GM12878 (cell line): ENCODE measurements at regions of chr11 and their contacts with region 1.

Region 1: DNA sequence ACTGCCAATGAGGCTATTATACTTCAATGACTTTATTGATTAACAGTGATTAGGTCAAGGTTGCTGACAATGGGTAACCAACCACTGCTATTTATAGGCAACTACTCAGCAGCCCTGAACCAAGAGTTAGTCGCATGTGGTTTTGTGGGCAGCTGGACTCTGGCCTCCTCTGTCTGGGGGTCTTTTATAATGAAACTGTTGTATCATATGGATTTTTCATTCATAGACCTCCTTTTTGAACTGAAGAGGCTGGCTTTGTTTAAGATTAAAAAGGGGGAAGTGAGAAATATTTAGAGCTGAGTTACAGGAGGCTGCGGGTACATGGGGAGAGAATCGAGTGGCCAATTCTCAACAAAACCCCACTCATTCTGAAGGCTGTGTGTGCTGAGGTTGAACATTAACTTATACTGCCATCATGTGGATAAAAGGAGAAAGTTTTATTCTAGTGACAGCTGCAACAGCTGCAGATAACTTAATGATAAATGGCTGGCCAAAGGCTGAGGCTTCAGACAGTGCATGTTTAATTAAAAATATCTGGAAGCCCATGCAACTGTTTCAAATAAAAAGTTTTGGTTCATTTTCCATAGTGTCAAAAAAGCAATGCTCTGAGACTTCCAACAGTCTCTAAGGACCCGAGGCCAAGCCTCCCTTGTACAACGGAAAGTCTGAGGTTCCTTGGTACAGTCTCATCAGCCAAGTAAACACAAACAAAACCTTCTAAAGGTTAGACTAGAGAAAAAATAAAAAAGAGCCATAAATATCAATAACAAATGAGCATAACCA is 682.6 kb downstream of the KCNA4 start:
- DNase-seq: peak; percentile 31
- ATAC-seq: peak; percentile 87
- H3K4me3 ChIP-seq: no peak overlapping the region
- H3K27ac ChIP-seq: no peak overlapping the region
- H3K4me1 ChIP-seq: no peaks in the 10 kb centered on the region
- H3K27me3 ChIP-seq: no peaks in the 10 kb centered on the region; a peak in 1 of 4 replicates
- CTCF ChIP-seq: peak; percentile 37 to 66 (median 46); a peak in 5 of 6 replicates
- EP300 ChIP-seq: peak; percentile 80 to 81; a peak in 2 of 4 replicates
- POLR2A ChIP-seq: no peak
- RAD21 ChIP-seq: peak; percentile 71

Region 2: DNA sequence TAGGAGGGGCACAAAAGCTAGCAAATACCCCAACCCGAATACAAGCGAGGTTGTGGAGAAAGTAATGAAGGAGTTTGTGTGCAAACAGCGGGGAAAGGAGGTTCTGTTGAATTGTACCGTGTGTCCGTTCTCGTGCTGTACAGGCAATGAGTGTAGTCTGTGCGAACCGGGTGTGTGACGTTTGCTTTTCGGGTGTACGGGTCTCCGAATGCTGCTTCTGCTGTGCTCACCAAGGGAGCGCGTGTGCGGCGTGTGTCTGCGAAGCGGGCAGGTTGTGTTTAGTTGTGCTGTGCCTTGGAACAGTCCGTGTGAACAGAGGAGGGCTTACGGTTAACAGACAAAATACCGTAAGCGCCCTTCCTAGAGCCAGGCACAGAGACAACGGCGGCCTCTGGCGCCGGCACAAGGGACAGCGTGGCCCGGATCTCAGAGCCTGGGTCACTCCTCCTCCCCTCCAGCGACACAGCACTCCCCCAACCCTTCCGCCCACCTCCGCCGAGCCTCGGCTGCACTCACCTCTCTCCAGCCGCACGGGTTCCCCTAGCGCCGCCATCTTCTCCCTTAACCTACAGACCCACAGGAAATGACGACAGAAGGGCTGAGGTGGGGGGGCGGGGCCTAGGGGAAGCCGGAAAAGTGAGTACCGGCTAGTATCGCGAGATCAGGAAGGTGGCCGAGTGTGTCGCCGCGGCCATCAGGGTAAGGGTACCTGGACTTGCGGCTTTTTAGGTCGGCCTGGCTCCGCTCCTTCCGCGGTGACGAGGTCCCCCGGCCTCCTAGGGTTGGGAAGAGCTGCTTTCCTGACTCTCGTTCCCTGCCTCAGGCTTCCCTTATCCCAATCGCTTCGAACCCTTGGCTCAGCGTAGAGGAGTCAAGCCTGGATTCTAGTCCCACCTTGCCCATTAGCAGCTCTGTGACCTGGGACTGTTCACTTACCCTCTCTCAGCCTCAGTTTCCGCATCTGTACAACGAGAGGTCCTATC is 1827.7 kb before region 1 on chr11 and contains the start of gene LIN7C:
- CTCF ChIA-PET with region 1: no interaction called
- POLR2A ChIA-PET with region 1: no interaction called
- RAD21 ChIA-PET with region 1: no interaction called
- SMC1A ChIA-PET with region 1: no interaction called
- in situ Hi-C with region 1: no loop called
- intact Hi-C with region 1: loop called (anchors 10 kb)
- DNase-seq: peak; percentile 80
- ATAC-seq: peak; percentile 94
- H3K4me3 ChIP-seq: peak within 1 kb of the TSS; percentile 95
- H3K27ac ChIP-seq: peak within 1 kb of the TSS; percentile 92
- H3K4me1 ChIP-seq: peaks cover 4% of the 10 kb centered on the region; the same call in 1 of the 2 replicates
- H3K27me3 ChIP-seq: no peaks in the 10 kb centered on the region
- CTCF ChIP-seq: peak in 1 of 3 experiments; percentile 20; a peak in 1 of 6 replicates
- EP300 ChIP-seq: no peak
- POLR2A ChIP-seq: peak; percentile 99
- RAD21 ChIP-seq: no peak
- polyA plus RNA-seq, gene LIN7C: 6.0 to 23.7 TPM

Region 3: DNA sequence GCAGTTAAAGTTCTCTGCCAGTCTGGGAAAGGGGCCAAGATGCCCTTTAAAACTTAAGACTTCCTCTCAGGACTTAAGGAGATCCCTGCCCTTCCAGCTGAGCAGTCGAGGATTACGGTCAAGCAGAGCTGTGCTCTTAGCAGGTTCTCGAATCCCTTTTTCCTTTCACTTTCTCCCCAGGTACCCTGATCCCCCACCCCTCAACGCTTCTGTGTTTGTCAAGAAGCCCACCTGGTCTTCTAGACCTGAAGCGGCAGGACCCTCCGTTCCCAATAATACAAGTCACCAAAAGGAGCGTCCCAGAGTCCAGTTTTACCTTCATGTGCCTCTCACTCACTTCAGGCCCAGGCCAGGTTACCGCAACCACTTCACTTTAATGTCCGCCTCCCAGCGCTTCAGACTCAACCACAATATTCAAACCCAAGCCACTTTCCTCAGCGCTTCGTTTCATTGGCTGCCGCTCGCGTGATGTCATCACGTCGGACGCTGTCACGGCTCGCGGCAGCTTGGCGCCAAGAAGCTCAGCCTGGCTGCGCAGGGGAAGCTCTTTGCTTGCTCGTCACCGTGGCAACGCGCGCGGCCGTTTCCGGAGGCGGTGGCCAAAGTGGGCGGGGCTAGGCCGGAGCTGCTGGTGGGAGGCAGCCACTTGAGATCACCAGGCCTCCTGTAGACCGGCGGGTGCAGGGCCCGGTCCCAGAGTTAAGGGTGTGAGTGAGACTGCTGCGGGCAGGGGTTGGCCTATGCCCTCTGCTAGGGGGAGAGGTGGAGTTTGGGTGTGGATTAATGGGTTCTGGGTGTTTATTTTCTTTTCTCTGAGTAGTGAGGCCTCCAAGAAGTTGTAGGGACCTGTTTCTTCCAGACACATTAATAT is 1226.2 kb before region 1 on chr11 and contains the starts of genes KIF18A and METTL15:
- CTCF ChIA-PET with region 1: no interaction called
- POLR2A ChIA-PET with region 1: no interaction called
- RAD21 ChIA-PET with region 1: no interaction called
- SMC1A ChIA-PET with region 1: no interaction called
- in situ Hi-C with region 1: no loop called
- intact Hi-C with region 1: loop called (anchors 10 kb)
- DNase-seq: peak; percentile 96
- ATAC-seq: peak; percentile 91
- H3K4me3 ChIP-seq: peak within 1 kb of the TSS; percentile 86
- H3K27ac ChIP-seq: peak within 1 kb of the TSS; percentile 84
- H3K4me1 ChIP-seq: peaks cover 6% of the 10 kb centered on the region
- H3K27me3 ChIP-seq: no peaks in the 10 kb centered on the region
- CTCF ChIP-seq: no peak
- EP300 ChIP-seq: peak in 1 of 2 experiments; percentile 5; a peak in 1 of 4 replicates
- POLR2A ChIP-seq: peak; percentile 92
- RAD21 ChIP-seq: no peak
- polyA plus RNA-seq, gene KIF18A: 11.5 to 14.9 TPM
- polyA plus RNA-seq, gene METTL15: 10.5 to 15.1 TPM

Region 4: DNA sequence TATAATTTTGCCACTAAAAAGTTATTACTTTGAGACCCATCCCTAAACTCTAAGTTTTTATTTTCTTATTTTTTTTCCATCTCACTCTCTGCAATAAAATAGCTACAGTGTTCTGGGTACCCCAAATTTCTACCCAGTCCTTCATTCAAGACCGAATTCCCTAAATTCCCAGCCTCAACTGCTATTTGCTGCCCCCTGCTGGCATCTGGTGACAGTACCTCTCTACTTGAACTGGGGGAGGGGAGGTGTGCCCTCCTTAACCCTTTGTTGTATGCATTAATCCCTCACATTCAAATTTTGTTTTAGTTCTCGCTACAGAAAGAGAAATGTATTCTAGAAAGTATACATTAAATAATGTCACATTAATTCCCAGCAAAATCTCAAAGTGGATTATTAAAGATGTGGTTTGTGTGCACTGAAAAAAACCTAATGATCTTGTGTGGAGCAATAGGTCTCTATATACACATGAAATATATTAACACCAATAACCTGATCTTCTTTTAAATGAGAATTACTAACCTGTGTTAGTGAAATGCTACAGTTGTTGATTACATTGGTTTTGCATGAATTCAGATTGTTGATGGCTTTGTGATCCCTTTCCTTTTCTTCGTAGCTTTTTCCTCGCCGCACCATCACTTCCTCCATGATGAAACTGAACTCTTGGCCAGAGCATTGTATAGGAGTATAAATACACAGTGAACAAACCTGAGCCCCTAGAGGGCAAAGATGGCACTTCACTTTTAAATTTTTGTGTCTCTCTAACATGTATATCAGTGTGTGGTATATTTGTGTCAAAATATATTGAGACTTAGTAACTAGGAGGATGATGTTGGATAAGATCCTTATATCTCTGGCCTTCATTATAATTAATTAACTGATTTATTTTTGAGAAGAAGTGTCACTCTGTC is 636.0 kb before region 1 on chr11:
- CTCF ChIA-PET with region 1: no interaction called
- POLR2A ChIA-PET with region 1: no interaction called
- RAD21 ChIA-PET with region 1: no interaction called
- SMC1A ChIA-PET with region 1: interaction called, 4 read pairs
- in situ Hi-C with region 1: loop called (anchors 25 kb)
- intact Hi-C with region 1: loop called (anchors 5 kb)
- DNase-seq: no peak
- ATAC-seq: peak; percentile 80
- H3K4me3 ChIP-seq: no peak overlapping the region
- H3K27ac ChIP-seq: no peak overlapping the region
- H3K4me1 ChIP-seq: no peaks in the 10 kb centered on the region
- H3K27me3 ChIP-seq: no peaks in the 10 kb centered on the region
- CTCF ChIP-seq: peak; percentile 78 to 85 (median 82)
- EP300 ChIP-seq: no peak
- POLR2A ChIP-seq: no peak
- RAD21 ChIP-seq: peak; percentile 72

Region 5: GRCh38 chr11:29272019-29272654 is 62.0 kb before region 1 on chr11:
- CTCF ChIA-PET with region 1: interaction called, 85 read pairs
- POLR2A ChIA-PET with region 1: no interaction called
- RAD21 ChIA-PET with region 1: interaction called, 21 read pairs
- SMC1A ChIA-PET with region 1: interaction called, 65 read pairs
- in situ Hi-C with region 1: no loop called
- intact Hi-C with region 1: loop called (anchors 5 kb)
- DNase-seq: no peak
- ATAC-seq: peak; percentile 75
- H3K4me3 ChIP-seq: no peak overlapping the region
- H3K27ac ChIP-seq: no peak overlapping the region
- H3K4me1 ChIP-seq: no peaks in the 10 kb centered on the region
- H3K27me3 ChIP-seq: no peaks in the 10 kb centered on the region
- CTCF ChIP-seq: peak in 2 of 3 experiments; percentile 9 to 31; a peak in 1 of 6 replicates
- EP300 ChIP-seq: no peak
- POLR2A ChIP-seq: no peak
- RAD21 ChIP-seq: 0 out of 2 replicates have a peak, but pooled peaks have one; percentile 17

Region 6: GRCh38 chr11:29321293-29322132 is 12.7 kb before region 1 on chr11:
- CTCF ChIA-PET with region 1: interaction called, 23 read pairs
- POLR2A ChIA-PET with region 1: no interaction called
- RAD21 ChIA-PET with region 1: interaction called, 8 read pairs
- SMC1A ChIA-PET with region 1: interaction called, 29 read pairs
- in situ Hi-C with region 1: no loop called
- intact Hi-C with region 1: no loop called
- DNase-seq: no peak
- ATAC-seq: no peak
- H3K4me3 ChIP-seq: no peak overlapping the region
- H3K27ac ChIP-seq: no peak overlapping the region
- H3K4me1 ChIP-seq: no peaks in the 10 kb centered on the region
- H3K27me3 ChIP-seq: no peaks in the 10 kb centered on the region
- CTCF ChIP-seq: no peak
- EP300 ChIP-seq: no peak
- POLR2A ChIP-seq: no peak
- RAD21 ChIP-seq: no peak

Region 7: DNA sequence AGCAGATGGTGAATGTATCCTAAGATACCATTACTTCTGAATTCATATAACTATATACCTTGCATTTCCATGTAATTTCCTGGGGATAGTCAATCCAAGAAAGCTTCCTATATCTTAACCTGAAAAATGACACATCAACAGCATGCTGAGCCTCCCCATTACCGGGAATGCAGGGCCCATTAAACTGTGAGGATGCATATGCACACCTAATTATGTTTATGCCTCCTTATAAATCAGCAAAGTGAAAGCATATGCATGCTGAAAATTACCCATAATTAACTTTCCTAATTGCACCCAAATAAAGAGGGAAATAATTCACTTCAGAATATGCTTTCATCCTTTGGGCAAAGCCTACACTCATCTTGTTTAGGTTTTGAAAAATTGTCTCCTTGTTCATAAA is 19.6 kb after region 1 on chr11:
- CTCF ChIA-PET with region 1: no interaction called
- POLR2A ChIA-PET with region 1: no interaction called
- RAD21 ChIA-PET with region 1: no interaction called
- SMC1A ChIA-PET with region 1: no interaction called
- in situ Hi-C with region 1: no loop called
- intact Hi-C with region 1: no loop called
- DNase-seq: no peak
- ATAC-seq: no peak
- H3K4me3 ChIP-seq: no peak overlapping the region
- H3K27ac ChIP-seq: no peak overlapping the region
- H3K4me1 ChIP-seq: no peaks in the 10 kb centered on the region
- H3K27me3 ChIP-seq: no peaks in the 10 kb centered on the region
- CTCF ChIP-seq: no peak
- EP300 ChIP-seq: no peak
- POLR2A ChIP-seq: no peak
- RAD21 ChIP-seq: no peak